ENCODE measurements at regions of chr17 and their contacts with region 1.

Region 1: DNA sequence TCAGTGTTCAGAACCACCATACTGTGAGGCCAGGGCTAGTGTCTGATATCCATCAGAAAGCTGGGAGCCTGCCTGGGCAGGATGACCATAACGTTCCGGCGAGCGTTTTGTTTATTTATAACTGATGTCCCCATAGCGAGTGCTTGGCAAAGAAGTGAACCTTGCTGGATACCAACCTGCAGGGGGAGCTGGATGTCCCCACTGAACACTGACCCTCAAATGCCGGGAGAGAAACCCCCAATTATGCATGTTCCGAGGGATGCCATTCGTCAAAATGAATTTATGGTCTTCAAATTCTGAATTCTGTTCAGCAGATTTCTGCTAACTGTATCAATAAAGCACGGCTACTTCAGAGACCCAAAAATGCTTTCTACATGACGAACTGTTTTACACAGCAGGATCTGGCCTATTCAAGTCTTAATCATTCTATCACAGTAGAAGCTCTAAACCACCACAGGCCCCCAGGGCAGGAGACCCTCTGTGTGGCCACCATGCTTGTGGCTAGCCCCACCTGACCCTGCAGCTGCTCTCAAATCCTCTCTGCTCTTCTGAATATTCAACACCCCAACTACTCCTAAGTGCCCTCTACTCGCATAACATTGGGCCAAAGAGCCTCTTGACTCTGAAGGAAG is 15.2 kb downstream of the MED24 start:
- H3K4me3 ChIP-seq: no peak overlapping the region
- H3K27ac ChIP-seq: no peak overlapping the region
- H3K4me1 ChIP-seq: no peaks in the 10 kb centered on the region
- CTCF ChIP-seq: no peak

Region 2: DNA sequence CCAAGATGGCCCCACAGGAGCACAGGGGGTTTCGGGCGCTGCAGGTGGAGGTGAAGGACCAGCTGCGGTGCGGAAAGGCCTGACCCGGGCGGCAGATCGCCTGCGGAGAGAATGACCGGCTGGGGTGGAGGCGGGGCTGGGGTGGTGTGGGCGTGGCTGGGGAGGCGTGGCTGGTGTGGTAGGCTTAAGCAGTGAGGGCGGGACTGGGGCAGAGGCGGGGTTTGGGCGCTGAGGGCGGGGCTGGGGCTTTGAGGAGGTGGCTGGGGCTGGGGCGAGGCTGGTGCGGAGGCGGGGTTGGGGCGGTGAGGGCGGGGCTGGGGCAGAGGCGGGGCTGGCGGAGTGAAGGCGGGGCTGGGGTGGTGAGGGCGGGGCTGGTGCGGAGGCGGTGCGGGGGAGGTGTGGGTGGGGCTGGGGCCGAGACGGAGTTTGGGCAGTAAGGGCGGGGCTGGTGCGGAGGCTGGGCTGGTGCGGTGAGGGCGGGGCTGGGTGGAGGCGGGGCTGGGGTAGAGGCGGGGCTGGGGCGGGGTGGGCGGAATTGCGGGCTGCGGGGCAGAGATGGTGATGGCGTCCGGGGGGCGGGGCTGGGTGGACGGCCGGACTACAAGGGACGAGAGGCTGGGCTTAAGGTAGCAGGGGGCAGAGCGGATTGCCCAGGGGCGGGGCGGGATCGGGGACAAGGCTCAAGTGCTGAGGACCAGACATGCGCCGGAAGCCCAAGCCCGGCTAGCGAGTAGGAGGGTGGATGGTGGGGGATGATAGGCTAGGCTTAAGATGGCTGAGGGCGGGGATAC is 86.1 kb before region 1 on chr17:
- CTCF ChIA-PET with region 1: no interaction called
- POLR2A ChIA-PET with region 1: no interaction called
- H3K4me3 ChIP-seq: peak overlapping the region; percentile 31
- H3K27ac ChIP-seq: peak overlapping the region; percentile 70; the same call in 1 of the 2 replicates
- H3K4me1 ChIP-seq: peaks cover 3% of the 10 kb centered on the region
- CTCF ChIP-seq: no peak

Region 3: DNA sequence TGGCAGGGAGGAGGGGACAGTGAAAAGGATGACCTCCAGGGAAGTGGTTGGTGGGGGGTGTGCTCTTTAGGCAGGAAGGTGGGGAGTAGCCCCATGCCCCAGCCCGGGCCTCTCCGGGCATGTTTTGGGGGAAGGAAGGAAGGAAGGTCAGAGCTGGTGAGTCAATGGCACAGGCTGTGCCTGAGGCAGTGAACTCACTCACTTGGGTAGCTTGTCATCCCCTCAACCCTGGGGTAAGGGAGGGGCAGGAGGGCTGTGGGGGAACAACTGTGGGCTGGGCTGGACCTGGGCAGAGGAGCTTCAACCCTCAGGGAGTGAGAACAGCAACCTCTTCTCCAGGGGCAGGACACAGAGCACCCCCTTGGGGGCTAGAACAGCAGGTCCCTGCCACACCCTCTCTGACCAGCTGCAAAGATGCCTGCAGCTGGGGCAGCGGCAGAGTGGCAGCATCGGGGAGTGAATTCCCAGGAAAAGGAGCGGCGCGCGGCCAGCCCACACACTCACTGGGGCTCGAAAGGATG is 17.5 kb before region 1 on chr17:
- CTCF ChIA-PET with region 1: interaction called, 127 read pairs
- POLR2A ChIA-PET with region 1: interaction called, 8 read pairs
- H3K4me3 ChIP-seq: no peak overlapping the region
- H3K27ac ChIP-seq: no peak overlapping the region
- H3K4me1 ChIP-seq: peaks cover 13% of the 10 kb centered on the region
- CTCF ChIP-seq: no peak

Region 4: GRCh38 chr17:40062329-40063186 is 23.6 kb after region 1 on chr17 and contains the start of gene THRA:
- CTCF ChIA-PET with region 1: interaction called, 47 read pairs
- POLR2A ChIA-PET with region 1: interaction called, 4 read pairs
- H3K4me3 ChIP-seq: peak within 1 kb of the TSS; percentile 84
- H3K27ac ChIP-seq: peak within 1 kb of the TSS; percentile 86; the same call in 1 of the 2 replicates
- H3K4me1 ChIP-seq: peaks cover 17% of the 10 kb centered on the region
- CTCF ChIP-seq: no peak

Region 5: DNA sequence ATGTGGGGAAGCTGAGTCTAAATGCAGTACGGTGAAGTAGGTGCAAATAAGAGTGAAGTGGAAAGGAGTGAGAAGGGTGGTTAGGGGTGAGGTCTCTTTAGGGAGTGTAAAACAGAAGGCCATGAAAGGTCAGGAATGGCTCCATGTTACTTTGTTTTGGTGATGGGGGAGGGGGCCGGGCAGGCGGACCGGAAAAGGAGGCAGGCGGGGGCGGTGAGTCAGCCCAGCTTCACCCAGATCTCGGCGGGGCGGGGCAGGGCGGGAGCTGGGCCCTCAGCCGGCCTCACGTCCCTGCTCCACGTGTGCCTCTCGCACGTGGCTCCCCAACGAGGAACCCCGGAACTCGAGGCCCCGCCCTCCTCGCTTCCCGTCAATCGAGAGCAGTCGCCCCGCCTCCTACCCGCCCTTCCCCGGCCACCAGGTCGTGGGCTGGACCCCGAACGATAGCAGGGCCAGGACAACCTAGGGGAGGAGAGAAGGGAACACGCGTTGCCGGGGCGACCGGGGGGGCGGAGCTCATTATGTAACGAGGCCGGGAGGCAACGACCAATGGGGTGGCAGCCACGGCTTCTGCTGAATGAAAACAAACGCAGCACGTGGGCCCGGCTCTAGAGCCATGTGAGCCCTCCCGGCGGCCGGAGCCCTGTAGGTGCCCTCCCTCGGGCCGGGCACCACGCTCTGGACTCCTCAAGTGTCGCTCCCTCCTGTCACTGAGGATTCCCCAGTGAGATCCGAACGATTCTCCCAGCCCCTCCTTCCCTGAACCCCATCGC is 60.0 kb after region 1 on chr17:
- CTCF ChIA-PET with region 1: interaction called, 14 read pairs
- POLR2A ChIA-PET with region 1: interaction called, 4 read pairs
- H3K4me3 ChIP-seq: peak overlapping the region; percentile 23
- H3K27ac ChIP-seq: peak overlapping the region; percentile 26; the same call in 1 of the 2 replicates
- H3K4me1 ChIP-seq: peaks cover 16% of the 10 kb centered on the region
- CTCF ChIP-seq: no peak

Measured in HEK293 (cell line).